ENCODE measurements at regions of chr1 and their contacts with region 1.

Region 1: GRCh38 chr1:99685516-99686180 is 39.7 kb downstream of the PALMD start:
- DNase-seq: peak; percentile 61
- H3K4me3 ChIP-seq: no peak overlapping the region
- H3K27ac ChIP-seq: no peak overlapping the region
- H3K4me1 ChIP-seq: no peaks in the 10 kb centered on the region
- CTCF ChIP-seq: peak; percentile 80

Region 2: GRCh38 chr1:99086057-99086456 is 599.6 kb before region 1 on chr1:
- CTCF ChIA-PET with region 1: no interaction called
- POLR2A ChIA-PET with region 1: no interaction called
- intact Hi-C with region 1: no loop called
- DNase-seq: no peak
- H3K4me3 ChIP-seq: no peak overlapping the region
- H3K27ac ChIP-seq: no peak overlapping the region
- H3K4me1 ChIP-seq: no peaks in the 10 kb centered on the region
- CTCF ChIP-seq: no peak

Region 3: DNA sequence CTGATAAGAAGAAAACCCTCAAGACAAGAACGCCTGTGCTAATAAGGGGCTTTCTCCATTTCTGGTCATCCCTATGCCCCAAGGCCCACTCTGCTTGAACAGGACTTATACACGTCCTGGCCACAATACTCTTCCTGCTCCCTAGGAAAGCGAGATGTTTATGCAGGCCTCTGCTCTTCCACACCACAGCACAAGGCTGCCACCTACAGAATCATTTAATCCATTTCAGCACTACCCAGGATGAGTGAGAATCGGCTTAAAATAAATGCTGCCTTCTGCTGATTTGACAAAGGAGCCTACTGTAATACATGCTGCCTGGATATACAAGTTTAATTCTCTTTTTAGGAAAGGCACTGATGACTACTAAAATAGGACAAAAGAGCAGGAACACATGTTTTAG is 51.4 kb after region 1 on chr1:
- CTCF ChIA-PET with region 1: interaction called, 10 read pairs
- POLR2A ChIA-PET with region 1: no interaction called
- intact Hi-C with region 1: no loop called
- DNase-seq: peak; percentile 25
- H3K4me3 ChIP-seq: no peak overlapping the region
- H3K27ac ChIP-seq: no peak overlapping the region
- H3K4me1 ChIP-seq: no peaks in the 10 kb centered on the region
- CTCF ChIP-seq: peak; percentile 57

Measured in OCI-LY7 (cell line).